Upper lobe of right lung (tissue), 1 donor: ENCODE measurements at regions of chr12 and their contacts with region 1.

Region 1: GRCh38 chr12:5733136-5733755 is 211.8 kb downstream of the ANO2 start:
- DNase-seq: no peak
- ATAC-seq: no peak
- H3K4me3 ChIP-seq: no peak overlapping the region
- H3K27ac ChIP-seq: no peak overlapping the region
- H3K4me1 ChIP-seq: no peaks in the 10 kb centered on the region
- H3K27me3 ChIP-seq: no peaks in the 10 kb centered on the region
- CTCF ChIP-seq: no peak

Region 2: DNA sequence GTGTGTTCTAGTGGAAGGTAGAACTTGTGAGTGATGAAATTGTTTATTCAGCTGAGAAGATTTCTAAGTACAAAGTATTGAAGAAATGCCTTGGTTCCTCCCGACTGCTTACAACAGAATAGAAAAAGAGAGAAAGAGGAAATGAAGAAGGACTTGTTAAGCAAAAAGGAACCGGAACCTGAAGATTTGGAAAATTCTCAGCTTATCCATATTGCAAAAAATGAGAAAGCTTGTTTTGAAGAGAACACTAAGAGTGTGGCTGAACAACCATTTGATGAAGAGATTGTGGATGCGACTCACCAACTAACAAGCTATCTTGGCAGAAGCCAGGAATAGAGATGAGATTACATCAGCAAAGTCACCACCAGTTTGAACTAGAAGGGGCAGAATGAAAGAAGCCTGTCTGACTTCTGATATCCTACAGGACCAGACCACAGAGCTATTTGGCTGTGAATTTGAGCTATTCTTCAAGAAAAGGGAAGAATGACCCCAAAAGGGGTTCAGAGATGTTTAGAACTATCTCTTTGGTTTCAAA is 1069.2 kb before region 1 on chr12:
- intact Hi-C with region 1: loop called (anchors 5 kb)
- DNase-seq: no peak
- ATAC-seq: no peak
- H3K4me3 ChIP-seq: no peak overlapping the region
- H3K27ac ChIP-seq: no peak overlapping the region
- H3K4me1 ChIP-seq: no peaks in the 10 kb centered on the region
- H3K27me3 ChIP-seq: no peaks in the 10 kb centered on the region
- CTCF ChIP-seq: no peak

Region 3: DNA sequence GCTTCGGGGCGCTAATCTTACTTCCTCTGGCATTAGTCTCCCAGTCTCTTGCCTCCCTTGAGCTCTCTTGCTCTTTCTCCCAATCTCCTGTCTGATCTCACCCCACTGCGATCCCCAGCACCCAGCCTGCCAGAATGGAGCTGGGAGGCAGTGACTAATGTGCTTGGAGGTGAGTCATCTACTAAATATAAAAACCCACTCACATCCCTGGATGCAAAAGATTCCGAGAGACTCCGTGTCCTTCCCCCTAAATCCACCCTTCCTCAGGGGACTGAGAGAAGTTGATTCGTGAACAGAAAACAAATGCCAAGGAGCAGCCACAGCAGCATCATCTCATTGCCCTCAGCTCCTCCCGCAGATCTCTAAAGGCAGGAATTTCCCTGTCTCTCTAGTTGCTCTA is 735.3 kb before region 1 on chr12:
- intact Hi-C with region 1: no loop called
- DNase-seq: no peak
- ATAC-seq: no peak
- H3K4me3 ChIP-seq: no peak overlapping the region
- H3K27ac ChIP-seq: no peak overlapping the region
- H3K4me1 ChIP-seq: no peaks in the 10 kb centered on the region
- H3K27me3 ChIP-seq: peaks cover 31% of the 10 kb centered on the region
- CTCF ChIP-seq: no peak

Region 4: GRCh38 chr12:5796171-5796958 is 63.1 kb after region 1 on chr12:
- intact Hi-C with region 1: no loop called
- DNase-seq: peak; percentile 72
- ATAC-seq: peak; percentile 84
- H3K4me3 ChIP-seq: no peak overlapping the region
- H3K27ac ChIP-seq: no peak overlapping the region
- H3K4me1 ChIP-seq: no peaks in the 10 kb centered on the region
- H3K27me3 ChIP-seq: peaks cover 6% of the 10 kb centered on the region
- CTCF ChIP-seq: peak; percentile 65